ENCODE measurements at regions of chr11 and their contacts with region 1.

Region 1: DNA sequence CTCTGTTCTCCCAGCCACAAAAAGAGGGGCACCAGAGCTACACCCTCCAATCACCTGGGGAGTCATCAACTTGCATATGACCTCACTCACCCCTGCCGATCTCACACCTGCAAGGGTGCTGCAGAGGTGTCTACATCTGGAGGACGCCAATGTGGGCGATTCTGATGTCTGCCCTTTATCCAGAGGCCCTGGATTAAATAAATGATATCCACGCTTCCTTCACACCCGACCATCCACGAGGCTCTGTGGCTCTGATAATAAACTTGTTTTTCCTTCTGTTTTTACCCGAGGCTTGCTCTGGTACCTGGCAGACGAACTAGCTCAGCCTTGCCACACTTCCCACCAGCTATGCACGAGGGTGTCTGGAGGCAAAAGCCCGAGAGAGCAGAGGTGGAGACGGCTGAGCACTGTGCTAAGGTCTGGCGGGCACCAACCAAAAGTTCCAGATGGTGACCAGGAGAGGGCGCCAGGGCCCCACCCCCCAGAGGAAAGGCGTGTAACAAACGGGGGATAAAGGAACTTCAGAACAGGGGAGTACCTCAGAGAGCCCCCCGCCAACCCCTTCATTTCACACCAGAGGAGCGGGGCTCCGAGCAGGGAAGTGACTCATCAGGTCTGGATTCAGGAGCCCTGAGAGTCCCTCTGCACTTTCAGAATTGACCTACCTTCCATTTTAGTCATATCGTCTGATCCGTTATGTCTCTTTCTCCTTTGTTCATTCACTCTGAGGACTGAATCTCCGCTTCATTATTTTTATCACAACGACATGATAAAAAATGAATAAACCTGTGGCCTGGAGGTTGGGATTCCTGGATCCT is 13.5 kb downstream of the SCN3B start:
- DNase-seq: no peak
- H3K4me3 ChIP-seq: no peak overlapping the region
- H3K27ac ChIP-seq: no peak overlapping the region
- H3K27me3 ChIP-seq: peaks cover 13% of the 10 kb centered on the region
- CTCF ChIP-seq: peak; percentile 82

Region 2: DNA sequence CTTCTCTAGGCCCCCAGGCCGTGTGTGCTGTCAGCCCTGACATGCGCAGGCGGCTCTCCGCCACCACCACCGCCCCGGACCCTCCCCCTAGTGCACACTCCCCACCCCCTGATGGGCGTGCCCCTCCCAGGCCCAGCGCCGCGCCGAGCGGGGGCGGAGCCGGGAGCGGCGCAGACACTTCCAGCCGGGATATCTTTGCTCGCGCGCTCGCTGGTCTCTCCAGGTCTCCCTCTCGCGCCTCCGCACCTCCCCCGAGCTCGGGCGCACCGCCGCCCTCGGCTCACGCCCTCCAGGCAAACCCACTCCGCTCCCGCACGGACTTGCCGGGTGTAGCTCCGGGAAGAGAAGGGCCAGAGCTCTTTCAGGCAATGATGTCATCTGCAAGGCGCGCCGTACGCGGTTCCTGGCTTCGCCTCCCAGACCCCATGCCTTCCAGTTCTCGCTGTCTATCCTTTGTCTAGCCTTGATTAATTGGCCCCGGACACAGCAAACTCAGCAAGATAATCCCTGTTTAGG is 13.7 kb after region 1 on chr11 and contains the start of gene SCN3B:
- CTCF ChIA-PET with region 1: interaction called, 10 read pairs
- POLR2A ChIA-PET with region 1: no interaction called
- DNase-seq: peak; percentile 21
- H3K4me3 ChIP-seq: peak within 1 kb of the TSS; percentile 66
- H3K27ac ChIP-seq: no peak within 1 kb of the TSS
- H3K27me3 ChIP-seq: peaks cover 8% of the 10 kb centered on the region
- CTCF ChIP-seq: no peak
- polyA plus RNA-seq, gene SCN3B: 0.09 and 0.17 TPM in 2 replicates

Measured in AG04450 (cell line).